Transverse colon (tissue), 4 donors: ENCODE measurements at regions of chr18 and their contacts with region 1.

Region 1: GRCh38 chr18:48675352-48675761 is 136.5 kb downstream of the CTIF start:
- DNase-seq: peak; percentile 89
- H3K4me3 ChIP-seq: no peak overlapping the region
- H3K27ac ChIP-seq: no peak overlapping the region
- H3K4me1 ChIP-seq: peaks cover 0 to 25% (median 5%) of the 10 kb centered on the region in 4 donors
- H3K27me3 ChIP-seq: no peaks in the 10 kb centered on the region
- CTCF ChIP-seq: peak; percentile 88 to 95 (median 91)
- EP300 ChIP-seq: no peak
- POLR2A ChIP-seq: no peak

Region 2: DNA sequence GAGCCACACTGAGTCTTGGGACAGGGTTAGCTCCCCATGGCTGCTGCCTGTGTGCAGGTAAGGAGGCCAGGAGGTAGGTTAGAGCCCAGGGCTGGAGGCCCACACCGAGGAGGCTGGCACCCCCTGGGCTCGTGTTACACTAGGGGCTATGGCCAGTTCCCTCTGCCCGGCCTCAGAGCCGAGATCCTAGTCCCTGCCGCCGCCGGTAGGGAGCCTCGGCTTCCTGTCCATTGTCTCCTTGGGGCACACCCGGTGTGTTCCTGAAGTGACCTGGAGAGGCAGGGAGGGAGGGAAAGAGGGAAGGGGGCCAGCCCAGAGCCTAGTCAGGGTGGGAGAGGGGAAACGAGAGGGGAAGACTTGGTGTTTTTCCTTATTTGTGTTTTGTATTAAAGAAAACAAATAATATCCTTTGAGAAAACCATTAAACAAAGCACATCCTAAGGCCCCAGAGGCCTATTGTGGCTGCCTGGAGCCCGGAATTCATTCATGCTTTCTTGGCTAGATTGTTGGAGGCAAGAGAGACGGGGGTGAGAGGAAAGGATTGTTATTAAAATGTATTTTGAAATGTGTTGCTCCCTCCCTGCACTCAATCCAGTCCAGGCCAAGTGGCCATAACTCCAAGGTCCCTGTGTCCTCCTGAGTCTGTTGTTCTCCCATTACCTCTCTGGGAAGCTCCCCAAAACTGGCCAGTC is 34.2 kb after region 1 on chr18:
- in situ Hi-C with region 1: no loop called
- intact Hi-C with region 1: no loop called
- DNase-seq: no peak
- H3K4me3 ChIP-seq: no peak overlapping the region
- H3K27ac ChIP-seq: no peak overlapping the region
- H3K4me1 ChIP-seq: peaks cover 0 to 2% (median under 1%) of the 10 kb centered on the region in 4 donors
- H3K27me3 ChIP-seq: no peaks in the 10 kb centered on the region
- CTCF ChIP-seq: no peak
- EP300 ChIP-seq: no peak
- POLR2A ChIP-seq: no peak

Region 3: GRCh38 chr18:48902023-48902855 is 226.9 kb after region 1 on chr18:
- in situ Hi-C with region 1: loop called in 1 of 4 experiments (anchors 25 kb)
- intact Hi-C with region 1: no loop called
- DNase-seq: peak; percentile 75
- H3K4me3 ChIP-seq: no peak overlapping the region
- H3K27ac ChIP-seq: peak overlapping the region; percentile 44 to 66 (median 58)
- H3K4me1 ChIP-seq: peaks cover 6 to 17% (median 13%) of the 10 kb centered on the region in 4 donors
- H3K27me3 ChIP-seq: no peaks in the 10 kb centered on the region
- CTCF ChIP-seq: no peak
- EP300 ChIP-seq: no peak
- POLR2A ChIP-seq: no peak

Region 4: GRCh38 chr18:49178736-49179135 is 503.4 kb after region 1 on chr18:
- in situ Hi-C with region 1: loop called in 2 of 4 experiments (anchors 10 to 25 kb)
- intact Hi-C with region 1: no loop called
- DNase-seq: no peak
- H3K4me3 ChIP-seq: no peak overlapping the region
- H3K27ac ChIP-seq: no peak overlapping the region
- H3K4me1 ChIP-seq: peaks cover 0 to 3% (median 0%) of the 10 kb centered on the region in 4 donors
- H3K27me3 ChIP-seq: no peaks in the 10 kb centered on the region
- CTCF ChIP-seq: peak; percentile 35 to 50 (median 36)
- EP300 ChIP-seq: no peak
- POLR2A ChIP-seq: no peak

Region 5: DNA sequence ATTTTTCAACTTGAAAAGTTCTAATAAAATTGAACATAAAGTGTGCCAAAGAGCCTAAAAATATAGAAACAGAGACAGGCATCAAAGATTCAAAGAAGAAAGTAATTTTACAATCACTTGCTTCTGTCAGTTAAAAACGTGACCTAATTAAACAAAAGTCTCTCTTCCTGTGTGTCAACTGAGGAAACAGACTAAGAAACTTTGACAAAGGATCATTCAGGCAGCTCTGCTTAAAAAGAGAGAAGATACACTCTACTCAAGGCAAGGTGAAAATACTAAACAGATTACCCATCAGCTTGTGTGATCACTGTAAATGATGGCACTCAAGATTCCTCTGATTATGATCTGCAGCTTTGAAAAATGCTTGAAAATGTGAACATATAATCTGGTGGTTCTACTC is 737.3 kb after region 1 on chr18:
- in situ Hi-C with region 1: loop called in 1 of 4 experiments (anchors 10 kb)
- intact Hi-C with region 1: loop called (anchors 10 kb)
- DNase-seq: no peak
- H3K4me3 ChIP-seq: no peak overlapping the region
- H3K27ac ChIP-seq: no peak overlapping the region
- H3K4me1 ChIP-seq: peaks cover 0 to 4% (median 0%) of the 10 kb centered on the region in 4 donors
- H3K27me3 ChIP-seq: no peaks in the 10 kb centered on the region
- CTCF ChIP-seq: no peak
- EP300 ChIP-seq: no peak
- POLR2A ChIP-seq: no peak

Region 6: DNA sequence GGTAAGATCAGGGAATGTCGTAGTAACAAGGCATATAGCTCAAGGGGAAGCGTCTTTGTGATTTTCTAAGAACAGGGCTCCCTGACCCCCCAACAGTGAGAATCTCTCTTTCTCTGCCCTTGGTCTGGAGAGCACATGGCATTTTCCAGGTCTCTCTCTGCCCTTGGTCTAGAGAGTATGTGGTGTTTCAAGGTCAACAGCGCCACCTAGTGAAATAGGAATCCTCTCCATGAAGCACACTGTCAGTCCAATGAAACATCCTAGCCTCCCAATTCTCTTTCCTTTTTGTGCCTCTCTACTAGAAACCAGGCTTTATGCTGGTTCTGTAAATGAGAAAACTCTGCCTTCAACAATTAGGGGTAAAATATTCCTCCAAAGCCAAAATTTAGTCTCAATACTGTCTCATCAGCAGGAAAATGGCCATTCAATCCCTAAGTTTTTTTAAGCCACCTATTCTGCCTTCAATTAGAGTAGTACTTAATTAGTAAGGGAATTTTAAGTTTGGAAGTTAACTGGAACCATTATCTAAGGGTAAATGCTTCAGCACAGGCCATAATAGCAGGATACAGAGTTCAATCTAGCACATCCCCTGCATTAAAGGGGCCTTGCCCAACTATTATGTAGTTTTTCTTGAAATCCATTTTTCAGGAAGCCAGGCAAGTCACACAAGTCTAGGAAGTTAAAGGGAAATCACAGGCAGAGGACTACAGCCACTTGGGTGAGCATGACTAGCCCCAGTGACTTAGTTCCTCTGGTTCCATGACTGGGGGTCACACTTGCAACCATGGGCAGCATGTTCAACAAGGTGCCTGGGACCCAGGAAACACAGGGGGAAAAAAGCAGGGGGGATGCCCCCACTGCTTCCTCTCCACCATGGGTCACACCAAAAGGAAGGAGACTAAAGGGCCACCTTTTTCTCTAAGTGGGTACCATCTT is 772.7 kb after region 1 on chr18:
- in situ Hi-C with region 1: loop called in 2 of 4 experiments (anchors 25 kb)
- intact Hi-C with region 1: no loop called
- DNase-seq: peak; percentile 21
- H3K4me3 ChIP-seq: no peak overlapping the region
- H3K27ac ChIP-seq: no peak overlapping the region
- H3K4me1 ChIP-seq: no peaks in the 10 kb centered on the region
- H3K27me3 ChIP-seq: no peaks in the 10 kb centered on the region
- CTCF ChIP-seq: peak; percentile 35 to 62 (median 58)
- EP300 ChIP-seq: no peak
- POLR2A ChIP-seq: no peak